ENCODE measurements at regions of chr16 and their contacts with region 1.

Region 1: GRCh38 chr16:19907161-19907992 is 22.7 kb upstream of the GPRC5B start:
- DNase-seq: peak; percentile 76 to 93
- H3K4me3 ChIP-seq: no peak overlapping the region
- H3K27ac ChIP-seq: no peak overlapping the region
- H3K4me1 ChIP-seq: peaks cover 0 to 3% (median 1%) of the 10 kb centered on the region in 4 experiments; a peak in 1 of 7 replicates
- H3K27me3 ChIP-seq: no peaks in the 10 kb centered on the region
- CTCF ChIP-seq: peak; percentile 96 to 99 (median 98)
- EP300 ChIP-seq: 0 out of 3 replicates have a peak, but pooled peaks of 1 of the 2 experiments have one; percentile 25
- POLR2A ChIP-seq: no peak
- RAD21 ChIP-seq: peak; percentile 99 to 100

Region 2: DNA sequence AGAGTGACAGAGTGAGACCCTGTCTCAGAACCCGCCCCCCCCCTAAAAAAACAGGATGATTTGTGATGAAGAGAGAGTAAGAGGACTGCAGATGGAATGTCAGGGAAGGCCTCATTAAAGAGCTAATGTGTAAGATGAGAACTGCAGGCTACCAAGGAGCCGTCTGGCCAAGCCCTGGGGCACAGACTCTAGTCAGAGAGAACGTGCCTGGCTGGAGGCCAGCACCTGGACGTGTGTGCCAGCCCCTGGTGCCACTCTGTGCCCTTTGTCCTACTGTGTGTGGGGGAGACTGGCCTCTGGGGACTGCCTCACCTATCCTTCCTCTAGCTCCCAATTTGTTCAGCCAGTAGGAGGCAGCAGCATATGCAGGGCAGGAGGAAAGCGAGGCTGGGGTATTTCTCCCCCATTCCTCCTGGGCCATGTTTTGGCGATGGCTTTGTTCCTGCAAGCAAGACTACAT is 226.5 kb before region 1 on chr16:
- CTCF ChIA-PET with region 1: no interaction called
- POLR2A ChIA-PET with region 1: no interaction called
- DNase-seq: peak in 1 of 2 experiments; percentile 61
- H3K4me3 ChIP-seq: no peak overlapping the region
- H3K27ac ChIP-seq: no peak overlapping the region
- H3K4me1 ChIP-seq: no peaks in the 10 kb centered on the region
- H3K27me3 ChIP-seq: no peaks in the 10 kb centered on the region
- CTCF ChIP-seq: peak; percentile 64 to 76 (median 70)
- EP300 ChIP-seq: no peak
- POLR2A ChIP-seq: no peak
- RAD21 ChIP-seq: peak; percentile 66 to 69

Region 3: DNA sequence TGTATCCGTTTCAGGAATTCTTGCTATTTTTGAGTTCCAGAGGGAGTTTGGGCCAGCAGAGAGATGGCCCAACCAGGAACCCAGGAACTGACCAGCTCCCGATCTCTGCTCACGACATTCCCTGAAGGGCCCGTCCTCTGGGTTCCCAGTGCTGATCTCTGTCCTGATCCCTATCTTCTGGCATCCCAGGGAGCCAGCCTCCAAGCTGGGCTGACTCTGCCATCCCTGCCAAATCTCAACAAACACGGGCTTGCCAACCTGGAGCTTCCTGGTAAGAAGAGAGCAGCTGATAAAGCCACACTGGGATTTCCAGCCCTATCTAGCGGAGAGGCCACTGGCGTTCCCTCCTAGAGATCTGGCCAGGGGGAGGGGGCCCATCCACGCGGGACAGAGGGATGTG is 39.0 kb before region 1 on chr16:
- CTCF ChIA-PET with region 1: no interaction called
- POLR2A ChIA-PET with region 1: no interaction called
- DNase-seq: no peak
- H3K4me3 ChIP-seq: no peak overlapping the region
- H3K27ac ChIP-seq: no peak overlapping the region
- H3K4me1 ChIP-seq: peaks cover 0 to 4% (median 0%) of the 10 kb centered on the region in 4 experiments; a peak in 1 of 7 replicates
- H3K27me3 ChIP-seq: no peaks in the 10 kb centered on the region
- CTCF ChIP-seq: no peak
- EP300 ChIP-seq: no peak
- POLR2A ChIP-seq: no peak
- RAD21 ChIP-seq: no peak

Region 4: DNA sequence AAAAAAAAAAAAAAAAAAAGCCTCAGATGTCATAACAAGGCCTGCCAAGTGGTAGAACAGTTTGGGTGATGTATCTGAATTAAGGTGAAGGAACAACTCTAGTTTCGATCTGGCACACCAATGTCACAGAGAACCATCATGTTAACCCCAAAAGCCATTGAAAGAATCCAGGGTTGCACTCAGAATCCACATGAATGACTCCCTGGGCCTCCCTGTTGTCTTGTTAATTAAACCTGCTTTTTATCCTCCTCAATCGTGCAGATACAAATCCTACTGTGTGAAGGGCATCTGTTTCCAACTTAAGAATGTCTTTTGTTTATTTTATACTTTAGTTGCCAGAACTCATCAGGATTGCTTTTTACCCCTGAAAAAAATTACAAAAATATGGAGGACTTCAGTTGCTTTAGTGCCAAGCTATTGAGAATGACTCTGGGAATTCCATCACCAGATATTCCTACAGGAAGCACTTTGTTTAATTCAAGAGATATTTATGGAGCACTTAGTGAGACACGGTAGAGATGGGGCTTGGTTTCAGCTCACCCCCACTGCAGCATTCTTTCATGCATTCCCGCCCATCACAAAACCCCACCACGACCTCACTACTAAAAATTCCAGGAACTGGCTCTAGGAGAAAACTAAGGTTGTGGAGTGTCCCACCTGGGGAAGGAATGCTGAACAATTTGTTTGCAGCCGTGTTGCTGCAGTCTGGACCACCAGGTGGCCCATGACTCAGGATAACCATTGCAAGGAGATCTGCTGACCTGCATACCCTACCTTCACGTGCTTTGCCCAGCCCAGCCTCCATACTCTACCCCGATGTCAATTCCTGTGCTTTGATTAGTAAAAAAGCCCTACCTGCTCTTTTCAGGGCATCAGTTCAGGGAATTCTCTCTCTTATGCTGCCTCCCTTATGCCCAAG is 41.1 kb after region 1 on chr16:
- CTCF ChIA-PET with region 1: interaction called, 14 read pairs
- POLR2A ChIA-PET with region 1: no interaction called
- DNase-seq: peak; percentile 67 to 74
- H3K4me3 ChIP-seq: peak overlapping the region in 1 of 4 experiments; percentile 27; a peak in 1 of 8 replicates
- H3K27ac ChIP-seq: peak overlapping the region; percentile 76
- H3K4me1 ChIP-seq: peaks cover 7 to 15% (median 11%) of the 10 kb centered on the region in 4 experiments
- H3K27me3 ChIP-seq: peaks cover 0 to 2% (median 0%) of the 10 kb centered on the region in 4 experiments; a peak in 1 of 7 replicates
- CTCF ChIP-seq: peak; percentile 55 to 68 (median 63)
- EP300 ChIP-seq: peak; percentile 4 to 88; a peak in 2 of 3 replicates
- POLR2A ChIP-seq: no peak
- RAD21 ChIP-seq: peak; percentile 49 to 65

Region 5: DNA sequence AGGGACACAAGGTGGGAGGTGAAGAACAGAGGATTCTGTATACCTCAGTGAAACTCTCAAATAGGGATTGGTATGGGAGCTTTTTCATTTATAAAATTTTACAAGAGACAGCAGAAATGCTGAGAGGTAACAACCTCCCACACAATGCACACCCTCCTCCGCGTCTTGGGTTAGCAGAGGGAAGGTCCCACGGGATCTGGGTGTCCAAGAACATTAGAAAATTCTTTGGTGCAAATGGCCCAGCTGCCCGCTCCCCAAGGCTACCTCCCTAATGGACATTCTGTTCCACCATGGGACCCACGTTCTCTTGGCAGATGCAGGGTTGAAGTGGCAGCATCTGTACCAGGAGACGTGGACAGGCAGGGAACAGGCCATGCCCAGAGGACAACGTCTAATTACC is 143.8 kb after region 1 on chr16:
- CTCF ChIA-PET with region 1: interaction called, 11 read pairs
- POLR2A ChIA-PET with region 1: no interaction called
- DNase-seq: no peak
- H3K4me3 ChIP-seq: no peak overlapping the region
- H3K27ac ChIP-seq: no peak overlapping the region
- H3K4me1 ChIP-seq: peaks cover 1 to 9% (median 4%) of the 10 kb centered on the region in 4 experiments; a peak in 2 of 7 replicates
- H3K27me3 ChIP-seq: no peaks in the 10 kb centered on the region
- CTCF ChIP-seq: no peak
- EP300 ChIP-seq: no peak
- POLR2A ChIP-seq: no peak
- RAD21 ChIP-seq: no peak

Region 6: GRCh38 chr16:20243731-20244281 is 336.4 kb after region 1 on chr16:
- CTCF ChIA-PET with region 1: interaction called, 10 read pairs
- POLR2A ChIA-PET with region 1: no interaction called
- DNase-seq: no peak
- H3K4me3 ChIP-seq: no peak overlapping the region
- H3K27ac ChIP-seq: no peak overlapping the region
- H3K4me1 ChIP-seq: peaks cover 0 to 5% (median 3%) of the 10 kb centered on the region in 4 experiments; a peak in 3 of 7 replicates
- H3K27me3 ChIP-seq: no peaks in the 10 kb centered on the region
- CTCF ChIP-seq: no peak
- EP300 ChIP-seq: no peak
- POLR2A ChIP-seq: no peak
- RAD21 ChIP-seq: no peak

Region 7: DNA sequence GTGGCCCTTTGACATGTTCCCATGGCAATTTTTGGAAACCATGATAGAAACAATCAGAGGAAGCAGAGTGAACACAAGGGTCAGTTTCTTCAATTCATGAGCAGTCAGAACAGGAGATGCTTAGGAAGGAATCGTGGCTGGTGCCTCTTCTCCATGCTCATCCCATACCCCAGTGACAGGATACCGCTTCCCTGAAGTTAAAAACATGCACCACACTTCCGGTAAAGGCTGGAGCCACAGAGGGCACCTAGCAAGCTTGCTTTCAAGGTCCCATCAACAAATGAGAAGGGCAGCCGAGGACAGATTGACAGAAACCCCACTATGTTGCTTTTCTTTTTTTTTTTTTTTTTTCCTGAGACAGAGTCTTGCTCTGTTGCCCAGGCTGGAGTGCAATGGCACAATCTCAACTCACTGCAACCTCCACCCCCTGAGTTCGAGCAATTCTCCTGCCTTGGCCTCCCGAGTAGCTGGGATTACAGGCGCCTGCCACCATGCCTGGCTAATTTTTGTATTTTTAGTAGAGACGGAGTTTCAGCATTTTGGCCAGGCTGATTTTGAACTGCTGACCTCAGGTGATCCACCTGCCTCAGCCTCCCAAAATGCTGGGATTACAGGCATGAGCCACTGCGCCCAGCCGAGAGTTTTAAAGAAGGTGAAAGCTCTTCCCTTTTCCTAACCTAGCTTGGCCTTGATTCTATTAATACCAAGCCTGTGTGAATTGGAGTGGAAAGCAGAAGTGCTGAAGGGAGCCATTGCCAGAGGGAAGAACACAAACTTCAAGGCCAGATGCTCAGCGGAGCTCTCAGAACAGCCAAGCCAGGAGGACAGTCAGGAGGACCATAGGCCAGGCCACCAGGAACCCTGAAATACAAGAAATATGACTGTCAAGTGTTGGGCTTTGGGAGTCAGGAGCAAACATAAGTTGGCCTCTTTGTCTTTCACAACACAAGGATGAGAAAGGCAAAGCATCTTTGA is 403.3 kb after region 1 on chr16:
- CTCF ChIA-PET with region 1: interaction called, 19 read pairs
- POLR2A ChIA-PET with region 1: no interaction called
- DNase-seq: no peak
- H3K4me3 ChIP-seq: no peak overlapping the region
- H3K27ac ChIP-seq: no peak overlapping the region
- H3K4me1 ChIP-seq: no peaks in the 10 kb centered on the region
- H3K27me3 ChIP-seq: no peaks in the 10 kb centered on the region
- CTCF ChIP-seq: no peak
- EP300 ChIP-seq: no peak
- POLR2A ChIP-seq: no peak
- RAD21 ChIP-seq: no peak

Region 8: GRCh38 chr16:20372701-20373100 is 465.3 kb after region 1 on chr16:
- CTCF ChIA-PET with region 1: interaction called, 11 read pairs
- POLR2A ChIA-PET with region 1: interaction called, 4 read pairs
- DNase-seq: no peak
- H3K4me3 ChIP-seq: no peak overlapping the region
- H3K27ac ChIP-seq: no peak overlapping the region
- H3K4me1 ChIP-seq: no peaks in the 10 kb centered on the region
- H3K27me3 ChIP-seq: no peaks in the 10 kb centered on the region; a peak in 1 of 7 replicates
- CTCF ChIP-seq: no peak
- EP300 ChIP-seq: no peak
- POLR2A ChIP-seq: no peak
- RAD21 ChIP-seq: no peak

Measured in H1 (cell line).